MCF 10A (cell line): ENCODE measurements at regions of chr1 and their contacts with region 1.

Region 1: GRCh38 chr1:218171285-218171893 is 113.7 kb upstream of the RRP15 start:
- DNase-seq: peak; percentile 68
- H3K4me3 Mint-ChIP-seq: no peak overlapping the region
- H3K27ac Mint-ChIP-seq: no peak overlapping the region
- H3K4me1 Mint-ChIP-seq: peaks cover 4% of the 10 kb centered on the region
- H3K27me3 Mint-ChIP-seq: peaks cover 89% of the 10 kb centered on the region
- CTCF ChIP-seq: peak; percentile 95

Region 2: DNA sequence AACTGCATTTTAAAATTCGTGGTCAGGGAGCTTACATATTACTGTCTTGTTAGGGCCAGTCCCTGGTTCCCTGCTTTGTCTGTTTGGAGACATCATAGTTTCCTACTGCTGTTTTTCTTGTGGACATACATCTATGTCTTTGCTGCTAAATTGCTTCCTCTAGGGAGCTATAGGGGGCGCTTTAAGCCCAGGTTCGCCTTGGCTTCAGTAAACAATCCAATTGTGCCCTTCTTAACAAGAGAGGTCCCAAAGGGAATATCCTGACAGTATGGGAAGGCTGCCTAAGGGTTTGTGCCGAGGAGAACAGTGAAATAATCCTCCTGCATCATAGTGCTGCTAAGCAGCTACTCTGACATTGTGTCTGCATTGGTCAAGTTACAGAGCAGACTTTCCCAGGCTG is 1860.6 kb before region 1 on chr1:
- CTCF ChIA-PET with region 1: no interaction called
- POLR2A ChIA-PET with region 1: no interaction called
- intact Hi-C with region 1: loop called (anchors 5 kb)
- DNase-seq: peak; percentile 75
- H3K4me3 Mint-ChIP-seq: no peak overlapping the region
- H3K27ac Mint-ChIP-seq: no peak overlapping the region
- H3K4me1 Mint-ChIP-seq: no peaks in the 10 kb centered on the region
- H3K27me3 Mint-ChIP-seq: peaks cover 77% of the 10 kb centered on the region
- CTCF ChIP-seq: peak; percentile 95

Region 3: GRCh38 chr1:216961516-216961915 is 1209.9 kb before region 1 on chr1:
- CTCF ChIA-PET with region 1: no interaction called
- POLR2A ChIA-PET with region 1: no interaction called
- intact Hi-C with region 1: loop called (anchors 1 kb)
- DNase-seq: no peak
- H3K4me3 Mint-ChIP-seq: no peak overlapping the region
- H3K27ac Mint-ChIP-seq: no peak overlapping the region
- H3K4me1 Mint-ChIP-seq: no peaks in the 10 kb centered on the region
- H3K27me3 Mint-ChIP-seq: no peaks in the 10 kb centered on the region
- CTCF ChIP-seq: peak; percentile 5

Region 4: DNA sequence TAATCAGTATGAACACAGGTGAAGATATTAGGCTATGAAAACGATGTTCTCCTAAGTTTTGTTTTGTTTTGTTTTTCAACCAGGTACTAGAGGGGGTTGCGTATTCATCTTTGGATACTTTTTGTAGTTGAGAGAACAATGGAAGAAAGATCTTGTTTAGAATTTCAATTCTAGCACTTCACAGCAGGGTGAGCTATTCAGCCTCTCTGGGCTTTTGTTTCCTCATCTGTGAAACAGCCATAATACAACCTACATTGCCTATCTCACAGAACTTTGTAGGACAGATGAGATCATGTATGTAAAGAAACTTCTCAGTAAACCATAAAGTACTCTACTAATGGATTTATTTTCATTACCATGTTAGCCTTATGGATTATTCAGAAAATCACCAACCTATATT is 740.0 kb before region 1 on chr1:
- CTCF ChIA-PET with region 1: interaction called, 4 read pairs
- POLR2A ChIA-PET with region 1: no interaction called
- intact Hi-C with region 1: loop called (anchors 5 kb)
- DNase-seq: peak; percentile 29
- H3K4me3 Mint-ChIP-seq: no peak overlapping the region
- H3K27ac Mint-ChIP-seq: no peak overlapping the region
- H3K4me1 Mint-ChIP-seq: peaks cover 7% of the 10 kb centered on the region
- H3K27me3 Mint-ChIP-seq: no peaks in the 10 kb centered on the region
- CTCF ChIP-seq: peak; percentile 23

Region 5: GRCh38 chr1:217889401-217889800 is 282.0 kb before region 1 on chr1:
- CTCF ChIA-PET with region 1: interaction called, 6 read pairs
- POLR2A ChIA-PET with region 1: no interaction called
- intact Hi-C with region 1: loop called (anchors 1 kb)
- DNase-seq: peak; percentile 58
- H3K4me3 Mint-ChIP-seq: no peak overlapping the region
- H3K27ac Mint-ChIP-seq: no peak overlapping the region
- H3K4me1 Mint-ChIP-seq: peaks cover 7% of the 10 kb centered on the region
- H3K27me3 Mint-ChIP-seq: no peaks in the 10 kb centered on the region
- CTCF ChIP-seq: peak; percentile 40

Region 6: GRCh38 chr1:217969428-217969827 is 202.0 kb before region 1 on chr1:
- CTCF ChIA-PET with region 1: no interaction called
- POLR2A ChIA-PET with region 1: no interaction called
- intact Hi-C with region 1: no loop called
- DNase-seq: no peak
- H3K4me3 Mint-ChIP-seq: no peak overlapping the region
- H3K27ac Mint-ChIP-seq: no peak overlapping the region
- H3K4me1 Mint-ChIP-seq: no peaks in the 10 kb centered on the region
- H3K27me3 Mint-ChIP-seq: peaks cover 32% of the 10 kb centered on the region
- CTCF ChIP-seq: no peak

Region 7: GRCh38 chr1:218025454-218025853 is 145.9 kb before region 1 on chr1:
- CTCF ChIA-PET with region 1: no interaction called
- POLR2A ChIA-PET with region 1: no interaction called
- intact Hi-C with region 1: no loop called
- DNase-seq: no peak
- H3K4me3 Mint-ChIP-seq: no peak overlapping the region
- H3K27ac Mint-ChIP-seq: no peak overlapping the region
- H3K4me1 Mint-ChIP-seq: no peaks in the 10 kb centered on the region
- H3K27me3 Mint-ChIP-seq: peaks cover 60% of the 10 kb centered on the region
- CTCF ChIP-seq: no peak